Activated CD4-positive, alpha-beta T cell treated with anti-CD3 and anti-CD28 coated beads for 36 hours (primary cell): ENCODE measurements at regions of chr12 and their contacts with region 1.

Region 1: DNA sequence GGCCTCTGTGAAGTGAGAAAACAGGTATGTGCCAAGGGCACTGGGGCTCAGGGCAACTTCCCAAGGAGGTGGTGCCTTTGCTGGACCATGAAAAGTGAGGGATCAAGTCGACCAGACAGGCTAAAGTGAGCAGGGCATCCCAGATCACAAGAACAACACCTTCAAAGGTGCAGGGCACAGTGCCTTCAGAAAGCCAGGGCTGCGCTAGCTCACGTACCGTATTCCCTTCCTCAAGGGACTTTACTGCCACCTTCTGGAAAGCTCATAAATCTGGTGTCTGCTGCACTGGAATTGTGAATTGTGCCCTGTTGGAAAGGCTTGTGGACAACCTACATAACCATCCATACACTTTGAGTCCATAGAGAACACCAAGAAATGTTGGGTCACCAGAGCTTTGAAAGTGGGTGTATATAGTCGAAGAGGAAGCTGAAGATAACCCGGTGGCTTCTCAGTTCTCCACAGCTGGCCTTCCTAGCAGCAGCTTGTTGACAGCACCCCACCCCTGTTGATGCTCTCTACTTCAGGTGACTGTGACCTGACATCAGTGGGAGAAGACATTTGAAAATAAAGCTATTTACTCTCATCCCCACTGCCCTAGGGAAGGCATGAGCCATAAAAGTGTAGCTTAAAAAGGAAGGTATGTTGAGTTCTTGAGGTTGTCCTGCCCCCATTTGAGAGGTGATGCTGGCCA is 24.5 kb downstream of the FIGNL2 start:
- DNase-seq: peak; percentile 55
- ATAC-seq: no peak
- H3K4me3 Mint-ChIP-seq: no peak overlapping the region
- H3K27ac Mint-ChIP-seq: peak overlapping the region; percentile 13
- H3K4me1 Mint-ChIP-seq: peaks cover 38% of the 10 kb centered on the region
- H3K27me3 Mint-ChIP-seq: no peaks in the 10 kb centered on the region

Region 2: DNA sequence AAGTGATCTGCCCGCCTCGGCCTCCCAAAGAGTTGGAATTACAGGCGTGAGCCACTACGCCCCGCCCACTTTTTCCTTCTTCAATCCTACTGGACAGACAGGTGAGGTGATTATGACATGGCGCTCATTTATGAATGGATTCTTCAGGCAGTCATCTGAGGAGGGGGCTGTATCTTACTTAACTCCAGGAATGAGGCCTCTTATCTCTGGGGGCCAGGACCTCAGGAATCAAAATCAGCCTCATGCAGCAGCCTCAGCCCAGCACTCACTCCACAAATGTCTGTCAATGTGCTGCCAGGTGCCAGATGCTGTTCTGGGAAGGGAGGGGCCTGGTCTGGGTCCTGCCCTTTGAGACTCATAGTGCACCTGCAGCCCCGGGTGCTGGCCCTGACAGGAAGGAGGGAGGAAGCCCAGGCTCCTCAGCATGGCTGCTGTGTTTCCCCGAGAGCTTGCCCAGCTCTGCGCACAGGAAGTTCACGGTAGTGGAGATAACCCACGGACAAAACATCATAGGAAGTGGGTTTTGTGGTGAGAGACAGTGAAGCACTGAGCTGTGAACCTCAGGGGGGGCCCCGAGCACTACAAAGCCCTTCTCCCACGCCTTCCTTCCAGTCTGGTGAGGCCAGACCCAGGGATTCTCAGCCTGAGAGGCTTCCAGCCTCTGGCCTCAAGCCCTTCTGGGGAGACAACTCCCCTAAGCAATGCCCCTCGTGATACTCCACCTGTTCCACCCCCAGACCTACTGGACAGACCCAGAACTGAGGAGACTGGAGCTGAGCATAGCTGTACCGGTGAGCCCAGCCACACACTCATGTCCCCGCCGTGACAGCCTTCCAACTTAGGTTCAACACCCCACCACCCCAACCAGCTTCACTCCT is 455.1 kb before region 1 on chr12:
- CTCF ChIA-PET with region 1: no interaction called
- POLR2A ChIA-PET with region 1: no interaction called
- intact Hi-C with region 1: loop called in 1 of 2 experiments (anchors 1 kb)
- DNase-seq: peak; percentile 94
- ATAC-seq: peak; percentile 97
- H3K4me3 Mint-ChIP-seq: peak overlapping the region; percentile 64
- H3K27ac Mint-ChIP-seq: peak overlapping the region; percentile 77
- H3K4me1 Mint-ChIP-seq: peaks cover 59% of the 10 kb centered on the region
- H3K27me3 Mint-ChIP-seq: no peaks in the 10 kb centered on the region

Region 3: DNA sequence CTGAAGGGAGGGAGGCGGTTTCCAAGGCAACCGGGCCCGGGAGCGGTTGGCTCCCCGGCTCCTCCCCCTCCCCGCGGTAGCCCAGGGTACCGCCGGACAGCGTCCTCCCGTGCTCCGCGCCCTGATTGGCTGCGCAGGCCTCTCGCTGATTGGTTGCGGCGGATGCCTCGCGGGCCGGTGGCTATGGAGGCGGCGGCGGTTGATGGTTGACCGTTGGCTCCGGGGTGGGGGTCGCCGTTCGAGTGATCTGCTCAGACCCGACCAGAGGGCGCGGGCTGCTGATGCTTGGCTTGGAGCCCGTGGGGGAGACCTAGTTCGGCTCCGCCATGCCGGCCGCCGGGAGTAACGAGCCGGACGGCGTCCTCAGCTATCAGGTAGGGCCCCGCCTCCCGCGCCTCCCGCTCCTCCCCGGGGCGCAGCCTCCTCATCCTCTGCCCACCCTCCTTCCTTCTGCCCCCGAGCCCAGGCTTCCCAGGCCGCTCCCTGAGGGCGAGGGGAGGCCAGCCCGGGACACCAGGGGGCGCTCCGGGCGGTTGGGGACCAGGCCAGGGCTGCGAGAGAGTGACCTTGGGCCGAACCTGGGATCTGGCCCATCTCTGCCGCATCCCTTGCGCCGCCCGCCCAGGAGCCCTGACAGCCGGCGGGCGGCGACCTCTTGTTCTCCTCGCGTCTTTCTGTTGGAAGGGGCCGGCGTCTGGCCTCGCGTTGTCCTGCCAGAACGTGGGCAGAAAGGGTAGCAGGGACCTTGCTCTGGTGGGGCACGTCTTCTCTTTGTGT is 399.2 kb before region 1 on chr12 and contains the start of gene SLC4A8:
- CTCF ChIA-PET with region 1: interaction called, 10 read pairs
- POLR2A ChIA-PET with region 1: no interaction called
- intact Hi-C with region 1: loop called (anchors 2 to 5 kb)
- DNase-seq: peak; percentile 89
- ATAC-seq: peak; percentile 96
- H3K4me3 Mint-ChIP-seq: peak within 1 kb of the TSS; percentile 71
- H3K27ac Mint-ChIP-seq: no peak within 1 kb of the TSS
- H3K4me1 Mint-ChIP-seq: peaks cover 11% of the 10 kb centered on the region
- H3K27me3 Mint-ChIP-seq: no peaks in the 10 kb centered on the region
- total RNA-seq, gene SLC4A8: 1.7 to 2.0 TPM

Region 4: GRCh38 chr12:51590347-51591019 is 233.5 kb before region 1 on chr12:
- CTCF ChIA-PET with region 1: interaction called, 3 read pairs
- POLR2A ChIA-PET with region 1: no interaction called
- intact Hi-C with region 1: loop called (anchors 2 to 10 kb)
- DNase-seq: peak; percentile 88
- ATAC-seq: peak; percentile 89
- H3K4me3 Mint-ChIP-seq: peak overlapping the region; percentile 76
- H3K27ac Mint-ChIP-seq: peak overlapping the region; percentile 63
- H3K4me1 Mint-ChIP-seq: peaks cover 16% of the 10 kb centered on the region
- H3K27me3 Mint-ChIP-seq: peaks cover 47% of the 10 kb centered on the region

Region 5: GRCh38 chr12:51740519-51740918 is 83.5 kb before region 1 on chr12:
- CTCF ChIA-PET with region 1: no interaction called
- POLR2A ChIA-PET with region 1: no interaction called
- intact Hi-C with region 1: no loop called
- DNase-seq: no peak
- ATAC-seq: no peak
- H3K4me3 Mint-ChIP-seq: no peak overlapping the region
- H3K27ac Mint-ChIP-seq: no peak overlapping the region
- H3K4me1 Mint-ChIP-seq: no peaks in the 10 kb centered on the region
- H3K27me3 Mint-ChIP-seq: peaks cover 11% of the 10 kb centered on the region

Region 6: DNA sequence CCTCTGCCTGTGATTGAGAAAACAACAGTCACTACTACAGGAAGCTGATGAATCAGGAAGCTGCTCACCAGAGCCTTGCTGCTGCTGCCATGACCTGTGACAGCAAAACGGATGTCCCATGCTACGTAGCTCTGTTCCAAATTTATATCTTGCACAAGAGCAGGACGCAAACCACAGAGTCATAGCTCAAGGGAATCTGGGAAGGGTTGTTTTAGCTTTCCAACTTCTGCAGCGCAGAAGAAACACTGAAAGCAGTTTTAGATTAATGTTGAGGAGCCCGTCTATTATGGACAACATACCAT is 62.0 kb after region 1 on chr12:
- CTCF ChIA-PET with region 1: interaction called, 5 read pairs
- POLR2A ChIA-PET with region 1: interaction called, 3 read pairs
- intact Hi-C with region 1: loop called in 1 of 2 experiments (anchors 2 kb)
- DNase-seq: peak; percentile 70
- ATAC-seq: peak; percentile 99
- H3K4me3 Mint-ChIP-seq: peak overlapping the region; percentile 12
- H3K27ac Mint-ChIP-seq: peak overlapping the region; percentile 87
- H3K4me1 Mint-ChIP-seq: peaks cover 19% of the 10 kb centered on the region
- H3K27me3 Mint-ChIP-seq: no peaks in the 10 kb centered on the region

Region 7: GRCh38 chr12:51970904-51971646 is 147.1 kb after region 1 on chr12:
- CTCF ChIA-PET with region 1: no interaction called
- POLR2A ChIA-PET with region 1: no interaction called
- intact Hi-C with region 1: loop called (anchors 1 to 5 kb)
- DNase-seq: peak; percentile 70
- ATAC-seq: peak; percentile 85
- H3K4me3 Mint-ChIP-seq: peak overlapping the region; percentile 53
- H3K27ac Mint-ChIP-seq: peak overlapping the region; percentile 82
- H3K4me1 Mint-ChIP-seq: peaks cover 64% of the 10 kb centered on the region
- H3K27me3 Mint-ChIP-seq: no peaks in the 10 kb centered on the region